ENCODE measurements at regions of chr1 and their contacts with region 1.

Region 1: GRCh38 chr1:220879076-220879508 is at the start of gene HLX:
- DNase-seq: peak; percentile 39
- H3K4me3 ChIP-seq: peak within 1 kb of the TSS; percentile 50 to 67
- H3K27ac ChIP-seq: peak within 1 kb of the TSS; percentile 72 to 80
- H3K4me1 ChIP-seq: no peaks in the 10 kb centered on the region
- H3K27me3 ChIP-seq: peaks cover 9% of the 10 kb centered on the region
- CTCF ChIP-seq: no peak
- POLR2A ChIP-seq: no peak
- total RNA-seq, gene HLX: 2.3 to 8.2 TPM

Region 2: DNA sequence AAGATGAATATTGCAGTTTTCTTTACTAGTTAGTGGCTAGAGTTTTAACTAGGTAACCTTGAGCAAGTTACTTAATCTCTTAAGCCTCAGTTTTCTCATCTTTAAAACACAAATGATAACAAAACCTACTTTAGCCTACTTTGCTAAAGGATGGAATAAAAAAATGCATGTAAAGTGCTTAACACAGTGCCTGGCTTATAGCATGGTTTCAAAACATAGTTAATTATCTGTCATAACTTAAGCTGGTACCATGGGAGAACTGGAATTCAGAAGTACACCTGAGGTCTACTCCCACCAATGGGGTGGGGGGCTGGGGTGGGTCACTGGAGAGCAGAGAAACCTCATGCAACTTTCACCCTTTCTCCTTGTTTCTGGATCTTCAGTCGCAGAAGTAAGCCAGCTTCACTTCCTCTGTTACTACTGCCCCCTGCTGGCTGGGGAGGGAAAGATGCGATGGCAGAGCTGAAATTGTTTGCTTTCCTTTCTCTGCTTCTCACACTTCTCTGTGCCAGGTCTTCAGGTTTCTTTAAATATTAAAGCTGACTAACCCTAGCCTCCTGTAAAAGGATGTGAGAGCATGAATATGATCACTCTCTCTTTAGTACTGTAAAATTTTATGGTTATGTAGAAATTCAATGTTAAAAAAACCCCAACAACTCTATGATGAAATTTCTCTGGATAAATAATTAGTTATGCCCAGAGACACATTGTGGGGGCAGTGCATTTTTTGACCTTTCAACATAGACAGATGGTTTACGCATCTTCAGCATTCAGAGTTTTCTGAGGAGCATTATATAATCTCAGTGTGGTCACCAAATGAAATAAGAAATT is 324.3 kb after region 1 on chr1:
- intact Hi-C with region 1: loop called (anchors 10 kb)
- DNase-seq: peak; percentile 33
- H3K4me3 ChIP-seq: no peak overlapping the region
- H3K27ac ChIP-seq: no peak overlapping the region
- H3K4me1 ChIP-seq: no peaks in the 10 kb centered on the region
- H3K27me3 ChIP-seq: peaks cover 4% of the 10 kb centered on the region
- CTCF ChIP-seq: peak; percentile 20 to 65 (median 53)
- POLR2A ChIP-seq: no peak

Region 3: DNA sequence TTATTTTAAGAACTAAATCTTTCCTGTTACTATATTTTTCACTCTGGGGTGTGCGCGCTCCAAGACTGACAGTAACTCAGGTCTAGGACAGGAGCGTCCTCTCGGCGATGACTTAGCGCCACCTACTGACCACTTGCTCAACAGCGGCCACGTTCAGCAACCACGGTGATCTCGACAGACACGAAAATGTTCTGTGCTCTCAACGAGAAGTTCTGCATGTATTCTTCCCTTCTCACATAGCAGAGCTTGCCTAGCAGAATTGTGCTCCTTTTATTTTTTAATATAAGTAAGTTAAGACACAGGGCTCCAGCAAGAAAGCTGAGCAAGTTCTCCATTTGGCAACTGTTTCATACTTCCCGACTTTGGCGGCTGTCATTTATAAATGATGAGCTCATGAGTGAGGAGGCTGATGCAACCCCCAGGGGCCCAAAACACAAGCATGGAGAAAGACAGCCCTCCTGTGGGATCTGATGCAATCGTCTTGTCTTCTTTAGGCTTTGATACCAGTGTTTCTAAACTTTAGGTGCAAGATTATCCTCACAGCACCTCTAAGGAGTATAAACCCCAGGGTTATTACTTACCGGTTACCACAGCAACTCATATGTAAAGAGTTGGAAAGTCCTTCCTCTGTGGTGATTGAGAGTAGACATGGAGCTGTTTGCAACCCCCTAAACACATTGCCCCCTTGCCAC is 1576.2 kb after region 1 on chr1:
- intact Hi-C with region 1: loop called (anchors 5 kb)
- DNase-seq: peak; percentile 79
- H3K4me3 ChIP-seq: no peak overlapping the region
- H3K27ac ChIP-seq: no peak overlapping the region
- H3K4me1 ChIP-seq: no peaks in the 10 kb centered on the region
- H3K27me3 ChIP-seq: no peaks in the 10 kb centered on the region
- CTCF ChIP-seq: peak; percentile 75 to 83 (median 78)
- POLR2A ChIP-seq: no peak